ENCODE measurements at regions of chrX and their contacts with region 1.

Region 1: DNA sequence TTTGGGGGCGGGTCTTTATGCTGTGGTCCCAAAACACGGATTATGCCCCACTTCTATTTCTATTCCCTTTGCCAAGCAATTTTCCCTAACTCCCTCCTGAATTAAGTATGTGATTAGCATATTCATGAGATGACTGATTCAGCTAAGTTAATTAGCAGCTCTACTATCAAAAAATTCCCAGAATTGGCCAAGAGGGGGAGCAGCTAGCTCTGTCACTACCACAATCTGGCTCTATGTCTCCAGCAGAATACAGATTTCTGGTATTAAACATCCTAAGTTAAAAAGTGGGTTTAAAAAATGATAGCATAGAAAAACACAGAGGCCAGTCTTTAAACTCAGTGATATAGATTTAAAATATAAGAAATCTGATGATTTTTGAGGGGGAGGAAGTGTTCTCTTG is 80.3 kb downstream of the GPC4 start:
- DNase-seq: peak; percentile 39
- H3K4me3 ChIP-seq: no peak overlapping the region
- H3K27ac ChIP-seq: no peak overlapping the region
- H3K4me1 ChIP-seq: no peaks in the 10 kb centered on the region
- H3K27me3 ChIP-seq: no peaks in the 10 kb centered on the region
- CTCF ChIP-seq: peak; percentile 38

Region 2: GRCh38 chrX:133627673-133628072 is 292.6 kb after region 1 on chrX:
- intact Hi-C with region 1: no loop called
- DNase-seq: no peak
- H3K4me3 ChIP-seq: no peak overlapping the region
- H3K27ac ChIP-seq: no peak overlapping the region
- H3K4me1 ChIP-seq: no peaks in the 10 kb centered on the region
- H3K27me3 ChIP-seq: no peaks in the 10 kb centered on the region
- CTCF ChIP-seq: no peak

Region 3: GRCh38 chrX:133668225-133668931 is 333.4 kb after region 1 on chrX:
- intact Hi-C with region 1: loop called (anchors 5 kb)
- DNase-seq: no peak
- H3K4me3 ChIP-seq: no peak overlapping the region
- H3K27ac ChIP-seq: no peak overlapping the region
- H3K4me1 ChIP-seq: no peaks in the 10 kb centered on the region
- H3K27me3 ChIP-seq: no peaks in the 10 kb centered on the region
- CTCF ChIP-seq: no peak

Region 4: DNA sequence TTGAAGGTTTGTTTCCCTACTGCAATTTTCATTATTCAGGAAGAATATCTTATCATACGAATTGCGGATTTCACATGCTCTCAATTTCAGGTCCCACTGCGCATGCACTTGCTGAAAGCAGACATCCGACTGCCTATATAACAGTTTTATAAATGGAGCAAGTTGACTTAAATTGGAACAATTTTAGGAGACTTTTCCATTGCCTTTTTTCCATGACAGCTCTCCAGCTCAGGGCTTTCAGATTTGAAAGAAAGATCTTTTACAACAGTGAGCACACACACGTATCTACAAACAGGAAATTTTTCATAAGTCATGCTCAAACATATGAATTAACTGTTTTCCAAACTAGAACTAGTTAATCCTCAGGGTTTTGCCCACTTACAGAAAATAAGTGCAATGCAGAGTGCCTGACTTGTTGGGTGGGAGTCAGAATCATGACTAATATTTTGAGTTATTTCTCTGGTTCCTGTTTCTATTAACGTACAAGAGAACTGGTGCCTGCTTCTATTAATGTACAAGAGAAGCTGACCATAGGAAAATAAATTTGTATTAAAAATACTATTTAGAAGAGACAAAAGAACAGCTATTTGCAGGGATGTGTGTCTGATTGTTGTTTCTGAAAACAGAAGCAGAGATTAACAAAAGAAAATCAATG is 512.4 kb after region 1 on chrX:
- intact Hi-C with region 1: no loop called
- DNase-seq: no peak
- H3K4me3 ChIP-seq: no peak overlapping the region
- H3K27ac ChIP-seq: no peak overlapping the region
- H3K4me1 ChIP-seq: no peaks in the 10 kb centered on the region
- H3K27me3 ChIP-seq: no peaks in the 10 kb centered on the region
- CTCF ChIP-seq: no peak